ENCODE measurements at regions of chr6 and their contacts with region 1.

Region 1: GRCh38 chr6:2931970-2932748 is 29.1 kb upstream of the SERPINB9 start:
- DNase-seq: peak; percentile 92
- ATAC-seq: peak; percentile 91
- H3K4me3 Mint-ChIP-seq: no peak overlapping the region
- H3K27ac Mint-ChIP-seq: peak overlapping the region; percentile 48
- H3K4me1 Mint-ChIP-seq: peaks cover 20% of the 10 kb centered on the region
- H3K27me3 Mint-ChIP-seq: peaks cover 7% of the 10 kb centered on the region

Region 2: DNA sequence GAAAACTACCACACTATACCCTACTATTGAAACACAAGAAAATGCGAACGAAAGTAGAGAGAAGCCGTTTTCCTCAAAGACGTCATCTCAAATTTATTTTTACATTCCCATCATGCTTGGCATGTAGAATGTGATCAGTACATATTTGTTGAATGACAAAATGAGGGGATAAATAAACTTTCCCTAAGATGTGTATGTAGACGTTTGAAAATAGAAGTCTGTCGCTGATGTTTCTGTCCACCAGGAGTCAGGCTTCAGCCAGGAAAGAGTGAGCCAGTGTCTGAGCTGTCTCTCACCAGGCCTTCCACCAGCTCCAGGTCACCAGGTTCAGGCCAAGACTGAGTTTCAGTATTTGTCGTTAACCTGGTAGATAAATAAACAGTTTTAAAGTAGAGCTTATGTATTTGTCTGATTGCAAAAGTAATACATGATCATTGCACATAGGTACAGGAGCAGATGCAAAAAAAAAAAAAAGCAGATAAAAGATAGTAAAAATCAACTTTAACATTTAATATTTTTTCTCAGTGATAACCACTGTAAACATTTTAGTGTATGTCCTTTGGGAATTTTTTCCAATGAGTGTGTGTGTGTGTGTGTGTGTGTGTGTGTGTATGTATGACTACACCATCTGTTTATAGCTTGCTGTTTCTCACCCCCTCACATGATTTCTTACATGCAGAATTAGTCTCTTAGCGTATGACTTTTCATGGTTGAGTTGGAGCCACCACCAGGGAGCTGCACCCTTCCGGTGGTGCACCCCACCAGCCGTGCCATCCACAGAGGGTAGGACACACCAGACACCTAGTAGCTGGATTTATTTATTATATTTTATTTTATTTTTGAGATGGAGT is 140.8 kb before region 1 on chr6:
- CTCF ChIA-PET with region 1: interaction called, 20 read pairs
- DNase-seq: peak; percentile 86
- ATAC-seq: peak; percentile 82
- H3K4me3 Mint-ChIP-seq: no peak overlapping the region
- H3K27ac Mint-ChIP-seq: peak overlapping the region; percentile 76
- H3K4me1 Mint-ChIP-seq: peaks cover 37% of the 10 kb centered on the region
- H3K27me3 Mint-ChIP-seq: no peaks in the 10 kb centered on the region

Region 3: GRCh38 chr6:2866181-2866846 is 65.8 kb before region 1 on chr6:
- CTCF ChIA-PET with region 1: interaction called, 11 read pairs
- DNase-seq: peak; percentile 38
- ATAC-seq: no peak
- H3K4me3 Mint-ChIP-seq: no peak overlapping the region
- H3K27ac Mint-ChIP-seq: no peak overlapping the region
- H3K4me1 Mint-ChIP-seq: peaks cover 64% of the 10 kb centered on the region
- H3K27me3 Mint-ChIP-seq: no peaks in the 10 kb centered on the region

Region 4: GRCh38 chr6:2911171-2911570 is 21.0 kb before region 1 on chr6:
- CTCF ChIA-PET with region 1: interaction called, 29 read pairs
- DNase-seq: no peak
- ATAC-seq: no peak
- H3K4me3 Mint-ChIP-seq: no peak overlapping the region
- H3K27ac Mint-ChIP-seq: no peak overlapping the region
- H3K4me1 Mint-ChIP-seq: peaks cover 24% of the 10 kb centered on the region
- H3K27me3 Mint-ChIP-seq: no peaks in the 10 kb centered on the region

Region 5: DNA sequence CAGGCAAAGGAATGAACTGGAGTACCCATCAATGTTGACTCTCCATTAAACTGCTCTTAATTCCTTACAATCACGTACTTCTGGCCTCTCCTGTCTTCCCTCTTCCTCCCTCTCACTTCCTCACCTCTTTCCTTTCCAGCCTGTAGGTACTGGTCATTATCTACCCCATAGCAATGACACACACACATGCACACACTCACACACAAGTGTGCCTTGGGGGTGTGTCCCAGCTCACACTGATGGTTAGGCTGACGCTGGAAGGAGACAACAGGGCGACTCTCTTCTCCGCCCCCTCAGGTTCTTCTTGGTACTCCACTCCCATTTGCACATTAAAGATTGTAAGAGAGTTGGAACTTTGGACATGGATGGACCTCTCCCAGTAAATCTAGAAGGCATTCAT is 15.1 kb before region 1 on chr6:
- CTCF ChIA-PET with region 1: interaction called, 34 read pairs
- DNase-seq: peak; percentile 14
- ATAC-seq: no peak
- H3K4me3 Mint-ChIP-seq: no peak overlapping the region
- H3K27ac Mint-ChIP-seq: no peak overlapping the region
- H3K4me1 Mint-ChIP-seq: peaks cover 16% of the 10 kb centered on the region
- H3K27me3 Mint-ChIP-seq: no peaks in the 10 kb centered on the region

Region 6: GRCh38 chr6:2952557-2953095 is 20.5 kb after region 1 on chr6:
- CTCF ChIA-PET with region 1: interaction called, 14 read pairs
- DNase-seq: peak; percentile 59
- ATAC-seq: peak; percentile 64
- H3K4me3 Mint-ChIP-seq: no peak overlapping the region
- H3K27ac Mint-ChIP-seq: no peak overlapping the region
- H3K4me1 Mint-ChIP-seq: peaks cover 3% of the 10 kb centered on the region
- H3K27me3 Mint-ChIP-seq: no peaks in the 10 kb centered on the region

Measured in activated CD8-positive, alpha-beta memory T cell treated with anti-CD3 and anti-CD28 coated beads, Interleukin-2, amount 10 ng/mL, durations not matched to agents 7 days and 5 days (primary cell).